Activated naive CD4-positive, alpha-beta T cell treated with anti-CD3 and anti-CD28 coated beads for 36 hours (primary cell): ENCODE measurements at regions of chr6 and their contacts with region 1.

Region 1: DNA sequence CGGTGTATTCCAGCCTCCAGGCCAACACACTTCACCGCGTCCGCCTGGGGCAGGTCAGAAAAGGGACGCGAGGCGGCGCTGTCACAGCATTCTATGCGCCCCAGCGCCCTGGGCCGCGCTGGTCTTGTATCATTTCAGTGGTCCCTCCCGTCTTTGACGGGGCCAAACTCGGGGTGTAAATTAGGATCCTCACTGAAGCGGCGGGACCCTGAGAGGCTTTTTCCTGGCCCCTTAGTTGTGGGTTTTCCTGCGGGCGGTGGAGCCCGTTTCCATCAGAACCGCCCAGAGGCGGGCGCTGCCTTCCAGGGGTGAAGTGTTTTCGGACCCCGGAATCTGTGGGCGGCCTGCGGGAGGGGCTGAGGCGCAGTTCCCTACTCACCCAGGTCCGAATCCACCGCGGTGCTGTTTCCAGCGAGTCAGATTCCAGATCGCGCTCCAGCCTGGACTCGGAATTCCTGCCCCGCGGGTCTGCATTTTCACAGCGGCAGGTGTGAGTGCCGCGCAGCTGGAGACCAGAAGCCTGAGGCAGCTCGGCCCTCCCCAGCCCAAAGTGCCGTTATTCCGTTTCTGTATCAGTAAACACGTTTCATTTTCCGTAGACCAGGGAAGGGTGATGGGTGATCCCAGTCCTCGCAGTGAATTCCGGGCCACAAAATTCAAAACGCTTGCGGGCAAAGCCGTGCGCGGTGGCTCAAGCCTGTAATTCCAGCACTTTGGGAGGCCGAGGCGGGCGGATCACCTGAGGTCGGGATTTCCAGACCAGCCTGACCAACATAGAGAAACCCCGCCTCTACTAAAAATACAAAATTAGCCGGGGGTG is 3.9 kb upstream of the MICB start:
- DNase-seq: peak; percentile 87
- H3K4me3 Mint-ChIP-seq: peak overlapping the region; percentile 89
- H3K27ac Mint-ChIP-seq: peak overlapping the region; percentile 90
- H3K4me1 Mint-ChIP-seq: peaks cover 43% of the 10 kb centered on the region
- H3K27me3 Mint-ChIP-seq: no peaks in the 10 kb centered on the region

Region 2: GRCh38 chr6:30730601-30731435 is 763.3 kb before region 1 on chr6:
- CTCF ChIA-PET with region 1: no interaction called
- intact Hi-C with region 1: no loop called
- DNase-seq: peak; percentile 94
- H3K4me3 Mint-ChIP-seq: peak overlapping the region; percentile 29
- H3K27ac Mint-ChIP-seq: no peak overlapping the region
- H3K4me1 Mint-ChIP-seq: peaks cover 47% of the 10 kb centered on the region
- H3K27me3 Mint-ChIP-seq: no peaks in the 10 kb centered on the region

Region 3: DNA sequence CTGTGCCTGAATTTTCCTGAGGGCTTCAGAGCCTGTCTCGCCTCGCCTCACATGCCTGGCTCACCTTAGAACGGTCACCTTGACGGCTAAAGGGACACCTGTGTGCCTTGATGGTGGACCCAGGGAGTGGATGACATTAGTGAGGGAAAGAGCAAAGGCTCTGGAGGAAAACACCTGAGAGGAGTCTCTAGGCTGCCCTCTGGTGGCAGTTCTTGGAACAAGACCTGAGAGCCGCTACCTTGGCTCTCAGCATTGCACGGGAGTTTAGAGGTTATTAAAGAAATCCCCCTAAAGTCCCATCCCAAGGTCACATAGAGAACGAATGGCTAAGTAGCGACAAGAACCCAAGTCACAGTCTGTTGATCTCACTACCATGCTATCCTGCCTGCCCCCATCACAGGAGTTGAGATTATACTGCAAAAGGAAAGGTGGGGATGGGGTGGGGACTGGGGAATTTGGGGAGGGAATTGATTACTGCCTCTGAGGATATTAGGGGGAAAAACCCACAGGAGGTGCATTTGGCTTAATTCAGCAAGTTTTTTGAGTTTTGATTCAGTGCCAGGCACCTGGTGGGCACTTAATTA is 365.9 kb before region 1 on chr6:
- CTCF ChIA-PET with region 1: no interaction called
- intact Hi-C with region 1: no loop called
- DNase-seq: peak; percentile 90
- H3K4me3 Mint-ChIP-seq: no peak overlapping the region
- H3K27ac Mint-ChIP-seq: no peak overlapping the region
- H3K4me1 Mint-ChIP-seq: peaks cover 5% of the 10 kb centered on the region
- H3K27me3 Mint-ChIP-seq: no peaks in the 10 kb centered on the region

Region 4: GRCh38 chr6:31403283-31403989 is 90.6 kb before region 1 on chr6 and contains the start of gene MICA:
- CTCF ChIA-PET with region 1: interaction called, 8 read pairs
- intact Hi-C with region 1: loop called (anchors 2 kb)
- DNase-seq: peak; percentile 77
- H3K4me3 Mint-ChIP-seq: peak within 1 kb of the TSS; percentile 92
- H3K27ac Mint-ChIP-seq: peak within 1 kb of the TSS; percentile 17
- H3K4me1 Mint-ChIP-seq: peaks cover 62% of the 10 kb centered on the region
- H3K27me3 Mint-ChIP-seq: no peaks in the 10 kb centered on the region
- total RNA-seq, gene MICA: 10.2 to 10.4 TPM

Region 5: DNA sequence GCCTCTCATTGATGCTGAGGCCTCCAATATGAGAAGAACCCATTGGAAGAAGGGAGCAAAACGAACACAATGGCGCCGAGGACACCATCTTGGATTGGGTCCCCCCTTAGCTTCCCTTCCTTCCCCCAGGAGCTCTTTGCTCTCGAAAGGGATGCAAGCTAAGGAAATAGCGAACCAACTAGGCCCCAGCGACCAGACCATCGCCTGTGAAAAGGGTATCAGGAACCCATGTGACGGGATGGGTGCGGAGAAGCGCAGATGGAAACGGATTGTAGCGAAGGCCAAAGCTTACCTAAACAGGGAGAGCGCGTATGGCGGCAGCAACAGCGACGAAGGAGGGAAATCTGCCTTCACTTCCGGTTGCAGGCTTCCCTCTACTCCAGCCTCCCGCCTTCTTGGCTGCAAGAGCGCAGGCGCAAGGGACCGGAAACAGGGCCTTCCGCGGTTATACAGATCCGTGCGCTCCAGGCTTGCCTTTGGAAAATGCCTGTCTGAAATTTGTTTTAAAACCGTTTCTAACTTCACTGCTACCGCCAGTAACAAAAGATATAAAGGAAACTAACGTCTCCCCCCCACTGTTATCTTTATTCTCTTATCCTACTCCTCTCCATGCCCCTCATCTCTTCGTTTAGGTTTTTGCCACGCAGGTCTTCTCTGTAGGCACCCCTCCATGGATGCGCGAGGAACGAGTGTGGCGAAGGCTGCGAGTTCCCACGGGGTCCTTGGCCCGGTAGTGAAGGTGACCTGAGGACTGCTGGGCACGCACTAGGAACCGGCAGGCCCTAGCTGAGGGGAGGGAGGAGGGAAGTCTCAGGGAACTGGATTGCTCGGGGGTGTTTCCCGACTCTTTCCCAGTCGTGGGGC is 47.8 kb after region 1 on chr6 and contains the start of gene DDX39B:
- CTCF ChIA-PET with region 1: interaction called, 6 read pairs
- intact Hi-C with region 1: loop called (anchors 1 kb)
- DNase-seq: peak; percentile 95
- H3K4me3 Mint-ChIP-seq: peak within 1 kb of the TSS; percentile 93
- H3K27ac Mint-ChIP-seq: peak within 1 kb of the TSS; percentile 99
- H3K4me1 Mint-ChIP-seq: peaks cover 40% of the 10 kb centered on the region
- H3K27me3 Mint-ChIP-seq: no peaks in the 10 kb centered on the region
- total RNA-seq, gene DDX39B: 600 to 624 TPM

Region 6: DNA sequence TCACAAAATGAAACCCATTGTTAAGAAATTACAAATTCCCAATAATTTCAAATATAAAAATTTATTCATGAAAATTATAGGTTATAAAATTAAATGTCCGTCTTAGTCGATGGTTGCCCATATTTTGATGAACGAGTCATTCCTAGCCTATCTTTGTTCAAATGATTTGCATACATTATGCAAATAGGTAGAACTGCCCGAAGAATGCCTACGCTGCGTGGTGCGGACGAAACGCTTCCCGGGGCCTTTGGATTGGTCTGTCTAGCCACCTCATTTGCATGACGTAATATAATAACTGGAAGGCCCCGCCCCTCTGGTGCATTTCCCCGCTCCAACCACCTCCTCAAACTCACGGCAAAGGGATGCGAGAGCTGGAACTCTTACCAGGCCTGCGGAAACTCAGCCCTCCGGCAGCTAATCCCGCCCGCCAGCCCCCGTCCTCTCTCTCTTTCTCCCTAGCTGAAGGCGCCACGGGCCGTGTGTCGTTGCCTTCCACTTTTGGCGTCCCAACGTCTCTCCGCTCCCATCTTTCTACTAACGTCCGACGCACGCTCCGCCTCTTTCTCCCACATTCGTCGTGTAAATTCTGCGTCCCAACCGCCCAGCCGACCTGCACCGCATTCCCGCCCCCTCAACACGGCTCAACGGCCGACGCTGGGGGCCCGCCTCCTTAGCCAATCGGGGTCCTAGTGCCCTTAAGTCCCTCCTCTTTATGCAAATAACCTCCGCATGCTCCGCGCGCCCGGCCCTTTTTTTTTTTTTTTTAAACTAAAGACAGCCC is 125.9 kb after region 1 on chr6:
- CTCF ChIA-PET with region 1: interaction called, 4 read pairs
- intact Hi-C with region 1: loop called (anchors 1 kb)
- DNase-seq: peak; percentile 99
- H3K4me3 Mint-ChIP-seq: peak overlapping the region; percentile 83
- H3K27ac Mint-ChIP-seq: peak overlapping the region; percentile 97
- H3K4me1 Mint-ChIP-seq: peaks cover 55% of the 10 kb centered on the region
- H3K27me3 Mint-ChIP-seq: no peaks in the 10 kb centered on the region

Region 7: DNA sequence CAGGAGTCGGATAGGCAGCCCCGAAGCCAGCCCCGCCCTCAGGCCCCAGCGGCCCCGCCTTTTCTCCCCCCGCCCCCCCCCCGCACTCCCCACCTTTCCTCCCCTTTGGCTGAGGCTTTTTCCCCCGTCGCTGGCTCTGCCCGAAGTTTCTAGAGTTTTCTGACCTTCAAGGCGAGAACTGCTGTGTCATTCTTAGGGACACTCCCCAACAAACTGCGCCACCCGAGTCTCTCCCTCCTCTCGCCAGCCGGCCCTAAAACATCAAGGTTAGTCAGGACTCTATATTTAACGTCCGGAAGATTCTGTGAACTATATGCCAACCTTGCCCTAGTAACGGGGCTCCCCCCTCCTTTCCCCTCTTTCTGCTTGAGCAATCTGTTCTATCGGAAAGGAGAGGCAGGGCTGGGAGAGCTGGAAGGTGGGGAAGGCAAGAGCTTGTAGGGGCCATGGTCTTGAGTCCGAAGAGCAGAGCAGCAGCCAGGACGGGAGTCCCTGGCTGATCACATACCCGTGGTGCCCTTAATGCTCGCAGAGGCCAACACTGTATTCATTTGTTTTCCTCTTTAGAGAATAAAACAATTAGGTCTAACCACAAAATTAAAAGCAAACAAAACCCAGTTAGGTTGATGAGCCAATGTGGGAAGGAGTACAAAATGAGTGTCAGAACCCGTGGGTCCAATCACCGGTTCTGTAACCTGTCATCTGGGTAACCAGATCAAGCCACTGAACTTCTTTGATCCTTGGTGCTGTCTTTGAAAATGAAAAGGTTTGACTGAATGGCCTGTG is 328.1 kb after region 1 on chr6:
- CTCF ChIA-PET with region 1: interaction called, 4 read pairs
- intact Hi-C with region 1: loop called (anchors 5 kb)
- DNase-seq: peak; percentile 83
- H3K4me3 Mint-ChIP-seq: peak overlapping the region; percentile 78
- H3K27ac Mint-ChIP-seq: peak overlapping the region; percentile 92
- H3K4me1 Mint-ChIP-seq: peaks cover 66% of the 10 kb centered on the region
- H3K27me3 Mint-ChIP-seq: no peaks in the 10 kb centered on the region